ENCODE measurements at regions of chr10 and their contacts with region 1.

Region 1: DNA sequence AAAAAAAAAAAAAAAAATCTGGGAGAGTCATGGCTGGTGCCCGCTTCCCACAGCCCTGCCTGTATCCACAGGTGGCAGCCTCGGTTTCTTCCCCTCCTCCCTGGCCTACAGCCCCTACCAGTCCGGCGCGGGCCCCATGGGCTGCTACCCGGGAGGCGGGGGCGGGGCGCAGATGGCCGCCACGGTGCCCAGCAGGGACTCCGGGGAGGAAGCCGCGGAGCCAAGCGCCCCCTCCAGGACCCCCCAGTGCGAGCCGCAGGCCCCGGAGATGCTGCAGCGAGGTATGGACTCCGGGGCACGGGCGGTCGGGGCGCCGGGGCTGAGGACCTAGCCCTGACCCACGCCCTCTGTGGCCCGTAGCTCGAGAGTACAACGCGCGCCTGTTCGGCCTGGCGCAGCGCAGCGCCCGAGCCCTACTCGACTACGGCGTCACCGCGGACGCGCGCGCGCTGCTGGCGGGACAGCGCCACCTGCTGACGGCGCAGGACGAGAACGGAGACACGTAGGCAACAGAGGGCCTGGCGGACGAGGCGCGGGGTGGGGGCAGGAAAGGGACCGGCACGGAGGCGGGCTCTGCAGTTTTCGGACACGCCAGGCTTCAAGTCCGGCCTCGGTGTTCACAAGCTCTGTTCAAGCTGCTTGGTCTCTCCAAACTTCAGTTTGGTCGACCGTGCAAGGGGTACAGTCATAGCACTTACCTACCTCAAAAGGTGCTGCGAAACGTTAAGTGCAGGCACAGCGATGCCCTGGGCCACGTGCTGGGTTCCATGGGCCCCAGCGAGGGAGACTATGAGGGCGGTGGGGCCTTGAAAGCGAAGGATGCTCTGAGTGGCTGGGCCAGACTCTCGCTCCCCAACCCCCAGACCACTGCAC is 3.9 kb downstream of the NFKB2 start:
- DNase-seq: peak; percentile 67 to 85
- ATAC-seq: peak; percentile 65 to 69
- H3K4me3 ChIP-seq: peak overlapping the region; percentile 62 to 74 (median 73)
- H3K27ac ChIP-seq: peak overlapping the region; percentile 82 to 96 (median 92)
- H3K4me1 ChIP-seq: peaks cover 19% of the 10 kb centered on the region in 2 donors
- H3K27me3 ChIP-seq: no peaks in the 10 kb centered on the region
- CTCF ChIP-seq: peak; percentile 93 to 98 (median 97)
- POLR2A ChIP-seq: peak; percentile 36 to 53

Region 2: DNA sequence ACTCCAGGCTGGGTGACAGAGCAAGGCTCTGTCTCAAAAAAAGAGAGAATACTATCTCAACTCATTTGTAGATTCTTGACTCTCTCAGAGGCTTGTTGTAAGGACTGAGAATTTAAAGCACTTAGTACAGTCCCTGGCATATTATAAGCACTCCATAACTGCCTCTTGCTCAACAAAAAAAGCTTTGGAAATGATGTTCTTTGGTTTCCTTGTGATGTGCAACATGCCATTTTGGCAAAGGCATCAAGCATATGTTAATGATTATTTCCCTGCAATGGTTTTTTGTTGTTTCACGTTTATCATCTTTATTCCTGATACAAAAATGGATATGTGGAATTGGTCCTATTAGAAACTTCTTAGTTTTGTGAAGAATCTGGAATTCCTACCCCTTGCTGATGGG is 231.6 kb before region 1 on chr10:
- in situ Hi-C with region 1: no loop called
- intact Hi-C with region 1: loop called (anchors 1 kb)
- DNase-seq: no peak
- ATAC-seq: no peak
- H3K4me3 ChIP-seq: no peak overlapping the region
- H3K27ac ChIP-seq: no peak overlapping the region
- H3K4me1 ChIP-seq: peaks cover 0 to 7% of the 10 kb centered on the region in 2 donors
- H3K27me3 ChIP-seq: no peaks in the 10 kb centered on the region
- CTCF ChIP-seq: no peak
- POLR2A ChIP-seq: no peak

Region 3: GRCh38 chr10:102245101-102245931 is 154.1 kb before region 1 on chr10 and contains the start of gene GBF1:
- in situ Hi-C with region 1: no loop called
- intact Hi-C with region 1: loop called (anchors 5 kb)
- DNase-seq: peak; percentile 92 to 96
- ATAC-seq: peak; percentile 83 to 87
- H3K4me3 ChIP-seq: peak within 1 kb of the TSS; percentile 74 to 96 (median 86)
- H3K27ac ChIP-seq: peak within 1 kb of the TSS; percentile 91 to 98 (median 93)
- H3K4me1 ChIP-seq: peaks cover 50 to 51% of the 10 kb centered on the region in 2 donors
- H3K27me3 ChIP-seq: no peaks in the 10 kb centered on the region
- CTCF ChIP-seq: no peak
- POLR2A ChIP-seq: peak; percentile 100
- total RNA-seq, gene GBF1: 31.4 to 64.2 (median 58.7) TPM

Region 4: DNA sequence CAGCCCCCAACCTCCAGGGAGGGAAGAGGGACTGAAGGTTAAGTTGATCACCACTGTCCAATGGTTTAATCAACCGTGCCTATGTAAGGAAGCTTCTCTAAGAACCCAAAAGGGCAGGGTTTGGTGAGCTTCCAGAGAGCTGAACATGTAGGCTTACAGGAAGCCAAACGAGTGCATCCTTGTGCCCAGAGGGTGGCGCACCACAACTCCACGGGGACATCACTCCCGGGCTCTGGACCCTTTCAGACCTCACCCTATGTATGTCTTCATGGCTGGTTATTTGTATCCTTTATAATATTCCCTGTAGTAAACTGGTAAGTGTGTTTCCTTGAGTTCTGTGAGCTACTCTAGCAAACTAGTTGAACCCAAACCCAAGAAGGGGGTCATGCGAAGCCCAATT is 15.4 kb before region 1 on chr10:
- in situ Hi-C with region 1: no loop called
- intact Hi-C with region 1: no loop called
- DNase-seq: no peak
- ATAC-seq: no peak
- H3K4me3 ChIP-seq: no peak overlapping the region
- H3K27ac ChIP-seq: no peak overlapping the region
- H3K4me1 ChIP-seq: no peaks in the 10 kb centered on the region
- H3K27me3 ChIP-seq: no peaks in the 10 kb centered on the region
- CTCF ChIP-seq: no peak
- POLR2A ChIP-seq: no peak

Region 5: DNA sequence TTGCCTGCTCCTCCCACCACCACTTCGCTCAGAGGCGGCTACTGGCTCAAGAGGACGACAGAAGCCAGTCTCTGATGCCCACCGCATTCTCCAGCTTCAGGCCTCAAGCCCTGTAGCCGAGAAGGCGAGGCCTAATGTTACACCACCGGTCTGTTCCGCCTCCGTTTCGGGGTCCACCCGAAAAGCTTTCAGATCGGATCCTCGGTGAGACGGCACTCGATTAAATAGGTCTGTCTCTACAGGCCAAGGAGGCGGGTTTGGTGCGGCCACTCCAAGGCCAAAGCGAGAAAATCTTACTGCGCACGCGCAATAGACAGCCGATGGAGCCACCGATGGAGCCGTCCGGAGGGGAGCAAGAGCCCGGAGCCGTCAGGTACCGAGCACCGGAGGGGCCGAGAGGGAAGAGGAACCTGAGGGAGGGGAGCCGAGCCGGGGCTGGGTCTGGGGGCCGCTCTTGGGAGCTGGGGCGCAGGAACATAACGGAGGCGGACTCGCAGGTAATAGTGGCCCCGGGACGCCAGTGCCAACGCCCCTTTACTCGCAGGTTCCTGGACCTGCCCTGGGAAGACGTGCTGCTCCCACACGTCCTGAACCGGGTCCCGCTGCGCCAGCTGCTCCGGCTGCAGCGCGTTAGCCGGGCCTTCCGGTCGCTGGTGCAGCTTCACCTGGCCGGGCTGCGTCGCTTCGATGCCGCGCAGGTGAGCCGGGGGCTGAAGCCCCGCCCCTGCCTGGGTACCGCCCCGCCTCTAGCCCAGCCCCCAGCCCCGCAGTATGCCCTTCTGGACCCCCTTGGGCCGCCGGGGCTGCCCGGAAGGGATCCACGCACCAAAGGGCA is 21.6 kb after region 1 on chr10 and contains the start of gene FBXL15:
- in situ Hi-C with region 1: no loop called
- intact Hi-C with region 1: loop called (anchors 1 kb)
- DNase-seq: peak; percentile 96
- ATAC-seq: peak; percentile 90 to 94
- H3K4me3 ChIP-seq: peak within 1 kb of the TSS; percentile 82 to 92 (median 87)
- H3K27ac ChIP-seq: peak within 1 kb of the TSS; percentile 85 to 97 (median 94)
- H3K4me1 ChIP-seq: peaks cover 27 to 30% of the 10 kb centered on the region in 2 donors
- H3K27me3 ChIP-seq: peaks cover 19 to 29% (median 23%) of the 10 kb centered on the region in 3 donors
- CTCF ChIP-seq: peak in 2 of 5 experiments; percentile 22 to 41
- POLR2A ChIP-seq: peak; percentile 30 to 39
- total RNA-seq, gene FBXL15: 14.2 to 34.8 (median 21.0) TPM

Region 6: GRCh38 chr10:102432162-102432950 is 32.9 kb after region 1 on chr10 and contains the start of gene CUEDC2:
- in situ Hi-C with region 1: no loop called
- intact Hi-C with region 1: no loop called
- DNase-seq: peak; percentile 94 to 96
- ATAC-seq: peak; percentile 96 to 97
- H3K4me3 ChIP-seq: peak within 1 kb of the TSS; percentile 72 to 100 (median 95)
- H3K27ac ChIP-seq: peak within 1 kb of the TSS; percentile 78 to 91 (median 88)
- H3K4me1 ChIP-seq: peaks cover 6 to 12% of the 10 kb centered on the region in 2 donors
- H3K27me3 ChIP-seq: peaks cover 6 to 11% (median 9%) of the 10 kb centered on the region in 3 donors
- CTCF ChIP-seq: no peak
- POLR2A ChIP-seq: peak; percentile 31 to 58
- total RNA-seq, gene CUEDC2: 51.6 to 83.1 (median 70.2) TPM

Region 7: DNA sequence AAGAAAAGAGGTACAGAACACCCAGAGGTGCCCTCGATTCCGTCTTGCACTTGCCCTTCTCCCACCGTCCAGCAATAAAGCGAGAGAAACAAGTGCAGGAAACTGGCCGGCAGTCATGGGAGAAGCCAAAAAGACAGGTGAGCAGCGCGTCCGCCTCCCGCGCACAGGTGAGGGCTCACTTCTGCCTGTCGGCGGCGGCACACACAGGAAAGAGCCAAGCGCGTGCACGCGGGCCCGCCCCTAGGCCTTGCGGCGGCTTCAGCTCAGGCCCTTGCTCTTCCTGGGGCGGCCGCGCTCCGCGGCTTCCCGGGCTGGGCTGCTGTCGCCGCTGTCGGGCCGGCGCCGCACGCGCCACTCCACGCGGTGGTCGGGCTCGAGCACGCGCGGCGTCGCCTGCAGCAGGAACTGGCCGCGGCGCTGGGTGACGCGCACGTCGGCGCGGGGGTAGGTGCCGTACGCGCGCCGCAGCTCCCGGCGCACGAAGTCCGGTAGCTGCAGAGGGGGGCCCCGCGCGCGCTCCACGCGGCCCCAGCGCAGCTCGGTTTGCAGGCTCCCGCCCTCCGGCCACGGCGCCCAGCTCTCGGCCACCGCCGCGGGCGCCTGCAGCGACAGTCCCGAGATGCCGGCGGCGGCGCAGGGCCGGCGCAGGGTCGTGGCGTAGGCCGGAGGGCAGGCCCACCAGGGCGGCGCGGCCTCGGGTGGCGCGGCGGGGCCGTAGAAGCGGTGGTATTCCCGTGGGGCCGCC is 50.9 kb after region 1 on chr10:
- in situ Hi-C with region 1: no loop called
- intact Hi-C with region 1: loop called (anchors 2 kb)
- DNase-seq: peak; percentile 42 to 75
- ATAC-seq: peak; percentile 84 to 86
- H3K4me3 ChIP-seq: peak overlapping the region; percentile 42 to 98 (median 74)
- H3K27ac ChIP-seq: peak overlapping the region; percentile 75 to 93 (median 86)
- H3K4me1 ChIP-seq: peaks cover 10 to 16% of the 10 kb centered on the region in 2 donors
- H3K27me3 ChIP-seq: no peaks in the 10 kb centered on the region
- CTCF ChIP-seq: peak in 2 of 5 experiments; percentile 6 to 12
- POLR2A ChIP-seq: peak; percentile 59 to 72